Dorsolateral prefrontal cortex (tissue), 120 donors: ENCODE measurements at regions of chr2 and their contacts with region 1.

Region 1: DNA sequence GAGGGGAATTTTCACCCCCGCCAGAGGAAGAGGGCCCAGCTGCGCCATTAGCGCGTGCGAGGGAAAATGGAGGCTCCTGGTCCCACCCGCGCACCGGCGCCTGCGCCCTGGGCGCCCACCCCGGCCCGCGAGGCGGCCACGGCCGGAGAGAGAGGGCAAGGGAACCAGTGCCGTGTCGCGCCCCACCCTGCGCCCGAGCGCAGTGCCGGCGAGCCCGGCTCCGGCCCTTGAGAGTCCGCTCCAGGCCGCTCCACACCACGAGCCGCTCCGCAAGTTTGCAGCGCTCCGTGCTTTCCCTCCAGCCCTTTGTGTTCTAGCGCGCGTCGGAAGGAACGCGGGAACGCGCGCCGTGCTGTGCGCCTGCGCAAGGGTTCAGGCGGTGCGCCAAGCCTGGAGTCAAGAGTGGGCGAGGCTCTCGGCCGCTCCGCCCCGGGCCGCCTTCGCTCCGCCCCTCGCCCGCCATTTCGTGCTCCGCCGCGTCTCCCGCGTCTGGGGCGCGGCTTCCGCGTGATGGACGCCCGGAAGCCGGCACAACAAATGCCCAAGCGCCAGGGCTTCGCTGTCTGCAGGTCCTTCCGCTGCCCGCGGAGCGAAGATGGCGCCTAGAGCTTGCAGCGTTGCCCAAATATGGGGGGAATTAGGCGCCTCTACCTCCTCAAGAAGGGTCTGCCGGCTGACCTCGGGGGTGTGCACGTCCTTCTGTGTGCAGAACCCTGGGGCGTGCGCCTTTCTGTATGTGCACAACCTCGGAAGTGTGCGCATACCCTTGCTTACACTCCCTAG is 46.1 kb upstream of the PTMA start:
- DNase-seq: peak; percentile 85 to 96 (median 94)
- H3K4me3 ChIP-seq: peak overlapping the region; percentile 13 to 84 (median 61)
- H3K27ac ChIP-seq: peak overlapping the region; percentile 92 to 100 (median 99)
- H3K27me3 ChIP-seq: no peaks in the 10 kb centered on the region
- CTCF ChIP-seq: peak in 37 of 56 donors; percentile 8 to 63 (median 35)

Region 2: DNA sequence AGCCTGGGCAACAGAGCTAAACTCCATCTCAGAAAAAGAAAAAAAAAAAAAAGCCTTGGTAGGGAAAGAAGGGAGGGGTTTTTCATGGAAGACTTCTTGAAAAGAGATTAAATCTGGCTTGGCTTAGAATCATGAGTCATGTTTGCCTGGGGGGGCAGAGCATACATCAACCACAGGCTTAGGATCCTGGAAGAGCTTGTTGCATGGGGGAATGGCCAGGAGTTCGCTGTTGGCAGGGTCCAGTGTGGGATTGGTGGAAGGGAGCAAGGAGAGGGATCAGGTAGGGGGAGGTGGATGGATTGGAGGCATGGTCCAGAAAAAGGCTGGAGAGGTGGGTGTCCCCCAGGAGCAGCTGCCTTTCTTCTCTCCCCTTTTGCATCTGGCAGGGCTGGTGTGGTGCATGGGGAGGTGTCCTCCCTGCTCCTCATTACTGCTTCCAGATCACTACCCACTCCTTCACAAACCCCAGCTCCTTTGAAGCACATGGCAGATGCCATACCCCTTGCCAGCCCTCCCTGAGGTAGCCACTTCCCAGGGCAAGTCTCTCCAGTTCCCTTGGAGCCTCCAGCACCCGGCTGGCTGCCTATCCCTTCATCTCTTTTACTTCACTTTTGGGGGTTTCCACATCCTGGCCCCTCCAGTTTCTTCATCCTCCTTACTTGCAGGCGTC is 461.3 kb before region 1 on chr2:
- intact Hi-C with region 1: no loop called
- DNase-seq: no peak
- H3K4me3 ChIP-seq: peak overlapping the region in 29 of 59 donors; percentile 4 to 95 (median 31)
- H3K27ac ChIP-seq: peak overlapping the region in 6 of 59 donors; percentile 3 to 35 (median 23)
- H3K27me3 ChIP-seq: no peaks in the 10 kb centered on the region
- CTCF ChIP-seq: no peak

Region 3: GRCh38 chr2:231463698-231464575 is 198.3 kb before region 1 on chr2 and contains the start of gene NCL:
- intact Hi-C with region 1: no loop called
- DNase-seq: peak in 5 of 10 donors; percentile 36 to 65 (median 46)
- H3K4me3 ChIP-seq: peak within 1 kb of the TSS; percentile 76 to 100 (median 94)
- H3K27ac ChIP-seq: peak within 1 kb of the TSS; percentile 70 to 99 (median 92)
- H3K27me3 ChIP-seq: no peaks in the 10 kb centered on the region
- CTCF ChIP-seq: peak in 16 of 56 donors; percentile 3 to 25 (median 8)
- total RNA-seq, gene NCL: 239 to 396 (median 335) TPM

Region 4: GRCh38 chr2:231780909-231781797 is 118.9 kb after region 1 on chr2 and contains the start of gene PDE6D:
- intact Hi-C with region 1: loop called in 1 of 2 experiments (anchors 10 kb)
- DNase-seq: peak; percentile 97 to 99 (median 98)
- H3K4me3 ChIP-seq: peak within 1 kb of the TSS; percentile 67 to 100 (median 92)
- H3K27ac ChIP-seq: peak within 1 kb of the TSS; percentile 63 to 97 (median 93)
- H3K27me3 ChIP-seq: no peaks in the 10 kb centered on the region
- CTCF ChIP-seq: peak in 22 of 56 donors; percentile 5 to 58 (median 22)
- total RNA-seq, gene PDE6D: 26.1 to 44.6 (median 33.3) TPM